HEK293 (cell line): ENCODE measurements at regions of chr17 and their contacts with region 1.

Region 1: GRCh38 chr17:57243171-57243948 is 13.0 kb upstream of the MSI2 start:
- H3K4me3 ChIP-seq: no peak overlapping the region
- H3K27ac ChIP-seq: no peak overlapping the region
- H3K4me1 ChIP-seq: no peaks in the 10 kb centered on the region
- CTCF ChIP-seq: peak; percentile 91

Region 2: GRCh38 chr17:57142925-57143324 is 100.4 kb before region 1 on chr17:
- CTCF ChIA-PET with region 1: interaction called, 19 read pairs
- POLR2A ChIA-PET with region 1: no interaction called
- H3K4me3 ChIP-seq: no peak overlapping the region
- H3K27ac ChIP-seq: no peak overlapping the region
- H3K4me1 ChIP-seq: no peaks in the 10 kb centered on the region
- CTCF ChIP-seq: no peak

Region 3: DNA sequence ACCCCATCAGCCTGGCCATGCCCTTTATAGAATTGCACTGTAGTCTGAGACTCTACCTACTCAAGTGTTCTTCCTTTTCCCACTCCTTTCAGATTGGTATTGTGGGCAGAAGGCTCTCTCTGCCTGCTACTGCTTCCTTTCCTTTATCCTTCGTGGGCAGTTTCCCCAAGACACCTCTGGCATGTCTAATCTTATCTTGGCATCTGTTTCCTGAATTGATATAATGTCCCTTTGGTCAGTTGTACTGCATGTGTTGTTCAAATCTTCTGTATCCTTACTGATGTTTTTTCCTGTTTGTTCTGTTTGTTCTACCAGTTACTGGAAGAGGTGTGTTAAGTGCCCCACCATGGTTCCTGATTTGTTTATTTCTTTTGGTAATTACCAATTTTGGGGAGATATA is 16.6 kb before region 1 on chr17:
- CTCF ChIA-PET with region 1: interaction called, 72 read pairs
- POLR2A ChIA-PET with region 1: no interaction called
- H3K4me3 ChIP-seq: no peak overlapping the region
- H3K27ac ChIP-seq: no peak overlapping the region
- H3K4me1 ChIP-seq: no peaks in the 10 kb centered on the region
- CTCF ChIP-seq: no peak

Region 4: DNA sequence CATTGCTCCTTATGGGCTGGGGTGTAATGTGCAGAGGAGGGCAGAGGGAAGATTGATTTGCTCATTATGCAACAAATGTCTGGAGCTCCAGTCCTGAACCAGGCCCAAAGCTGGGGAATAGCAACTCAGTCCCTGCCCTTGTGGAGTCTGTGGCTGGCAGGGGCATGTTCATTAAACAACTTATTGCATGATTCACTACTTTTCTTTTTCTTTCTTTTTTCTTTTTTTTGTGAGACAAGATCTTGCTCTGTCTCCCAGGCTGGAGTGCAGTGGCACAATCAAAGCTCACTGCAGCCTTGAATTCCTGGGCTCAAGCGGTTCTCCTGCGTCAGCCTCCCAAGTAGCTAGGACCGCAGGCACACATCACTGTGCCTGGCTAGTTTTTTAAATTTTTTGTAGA is 36.1 kb after region 1 on chr17:
- CTCF ChIA-PET with region 1: interaction called, 13 read pairs
- POLR2A ChIA-PET with region 1: no interaction called
- H3K4me3 ChIP-seq: no peak overlapping the region
- H3K27ac ChIP-seq: no peak overlapping the region
- H3K4me1 ChIP-seq: peaks cover 15% of the 10 kb centered on the region
- CTCF ChIP-seq: no peak

Region 5: GRCh38 chr17:57552114-57552624 is 308.8 kb after region 1 on chr17:
- CTCF ChIA-PET with region 1: interaction called, 10 read pairs
- POLR2A ChIA-PET with region 1: no interaction called
- H3K4me3 ChIP-seq: no peak overlapping the region
- H3K27ac ChIP-seq: no peak overlapping the region; the same call in 1 of the 2 replicates
- H3K4me1 ChIP-seq: peaks cover 59% of the 10 kb centered on the region
- CTCF ChIP-seq: peak; percentile 54

Region 6: GRCh38 chr17:57739402-57740392 is 496.3 kb after region 1 on chr17:
- CTCF ChIA-PET with region 1: interaction called, 38 read pairs
- POLR2A ChIA-PET with region 1: no interaction called
- H3K4me3 ChIP-seq: no peak overlapping the region
- H3K27ac ChIP-seq: no peak overlapping the region
- H3K4me1 ChIP-seq: no peaks in the 10 kb centered on the region
- CTCF ChIP-seq: 0 out of 2 replicates have a peak, but pooled peaks have one; percentile 31